HCT116 (cell line): ENCODE measurements at regions of chr1 and their contacts with region 1.

Region 1: DNA sequence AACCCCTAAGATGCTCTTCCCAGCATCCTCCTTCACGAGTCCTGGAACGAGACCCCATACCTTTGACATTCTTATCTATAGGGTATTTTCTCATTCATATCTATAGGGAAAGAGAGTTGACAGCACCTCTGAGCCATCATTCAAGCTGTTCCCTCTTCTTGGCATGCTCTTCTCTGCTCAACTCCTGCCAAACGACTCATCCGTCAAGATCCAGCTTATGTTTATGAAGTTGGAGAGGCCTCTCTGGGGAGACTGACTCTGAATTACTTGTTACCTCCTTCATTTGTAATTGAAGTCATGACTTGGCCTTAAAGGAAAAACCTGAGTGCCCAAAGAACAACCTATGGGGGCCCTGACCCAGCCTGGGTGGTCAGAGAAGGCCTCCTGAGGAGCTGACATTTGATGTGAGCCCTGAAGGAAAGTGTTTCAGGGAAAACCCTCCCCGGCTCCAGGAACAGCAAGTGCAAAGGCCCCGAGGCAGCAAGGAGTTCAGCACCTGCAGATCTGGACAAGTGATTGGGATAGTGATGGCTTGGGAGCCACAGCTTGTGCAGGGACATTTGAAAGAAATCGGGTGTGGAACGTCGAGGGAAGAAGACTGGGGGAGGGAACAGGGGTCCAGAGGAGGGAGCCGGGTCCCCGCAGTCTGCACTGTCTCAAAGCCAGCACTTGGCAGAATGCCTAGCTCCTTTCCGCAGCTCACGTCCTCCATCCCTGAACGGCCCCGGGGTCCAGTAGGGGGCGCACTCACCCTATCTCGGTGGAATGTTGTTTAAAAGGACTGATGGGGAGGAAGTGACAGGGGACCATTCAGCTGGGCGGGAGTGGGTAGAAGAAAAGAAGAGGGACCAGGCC is 14.0 kb upstream of the CDA start:
- DNase-seq: peak; percentile 85
- ATAC-seq: peak; percentile 86
- H3K4me3 ChIP-seq: no peak overlapping the region
- H3K27ac ChIP-seq: peak overlapping the region; percentile 61
- H3K4me1 ChIP-seq: peaks cover 17 to 44% of the 10 kb centered on the region in 2 experiments
- H3K27me3 ChIP-seq: 0 out of 2 replicates have a peak, but pooled peaks cover 2% of the 10 kb centered on the region
- CTCF ChIP-seq: peak; percentile 93 to 96 (median 95); a peak in 5 of 6 replicates
- POLR2A ChIP-seq: no peak
- RAD21 ChIP-seq: peak; percentile 97

Region 2: GRCh38 chr1:20472860-20473711 is 101.8 kb before region 1 on chr1:
- CTCF ChIA-PET with region 1: no interaction called
- POLR2A ChIA-PET with region 1: no interaction called
- RAD21 ChIA-PET with region 1: no interaction called
- intact Hi-C with region 1: no loop called
- DNase-seq: no peak
- ATAC-seq: no peak
- H3K4me3 ChIP-seq: no peak overlapping the region
- H3K27ac ChIP-seq: no peak overlapping the region
- H3K4me1 ChIP-seq: peaks cover 36 to 38% of the 10 kb centered on the region in 2 experiments
- H3K27me3 ChIP-seq: 0 out of 2 replicates have a peak, but pooled peaks cover under 1% of the 10 kb centered on the region
- CTCF ChIP-seq: no peak
- POLR2A ChIP-seq: no peak
- RAD21 ChIP-seq: no peak

Region 3: GRCh38 chr1:20521960-20522861 is 52.7 kb before region 1 on chr1:
- CTCF ChIA-PET with region 1: interaction called, 3 read pairs
- POLR2A ChIA-PET with region 1: no interaction called
- RAD21 ChIA-PET with region 1: interaction called in 1 of 2 experiments, 3 read pairs
- intact Hi-C with region 1: loop called (anchors 2 kb)
- DNase-seq: peak; percentile 81
- ATAC-seq: peak; percentile 94
- H3K4me3 ChIP-seq: peak overlapping the region in 1 of 2 experiments; percentile 18; a peak in 2 of 4 replicates
- H3K27ac ChIP-seq: no peak overlapping the region
- H3K4me1 ChIP-seq: peaks cover 0 to 8% of the 10 kb centered on the region in 2 experiments; a peak in 2 of 4 replicates
- H3K27me3 ChIP-seq: no peaks in the 10 kb centered on the region
- CTCF ChIP-seq: peak; percentile 83 to 96 (median 91)
- POLR2A ChIP-seq: no peak
- RAD21 ChIP-seq: peak; percentile 99

Region 4: DNA sequence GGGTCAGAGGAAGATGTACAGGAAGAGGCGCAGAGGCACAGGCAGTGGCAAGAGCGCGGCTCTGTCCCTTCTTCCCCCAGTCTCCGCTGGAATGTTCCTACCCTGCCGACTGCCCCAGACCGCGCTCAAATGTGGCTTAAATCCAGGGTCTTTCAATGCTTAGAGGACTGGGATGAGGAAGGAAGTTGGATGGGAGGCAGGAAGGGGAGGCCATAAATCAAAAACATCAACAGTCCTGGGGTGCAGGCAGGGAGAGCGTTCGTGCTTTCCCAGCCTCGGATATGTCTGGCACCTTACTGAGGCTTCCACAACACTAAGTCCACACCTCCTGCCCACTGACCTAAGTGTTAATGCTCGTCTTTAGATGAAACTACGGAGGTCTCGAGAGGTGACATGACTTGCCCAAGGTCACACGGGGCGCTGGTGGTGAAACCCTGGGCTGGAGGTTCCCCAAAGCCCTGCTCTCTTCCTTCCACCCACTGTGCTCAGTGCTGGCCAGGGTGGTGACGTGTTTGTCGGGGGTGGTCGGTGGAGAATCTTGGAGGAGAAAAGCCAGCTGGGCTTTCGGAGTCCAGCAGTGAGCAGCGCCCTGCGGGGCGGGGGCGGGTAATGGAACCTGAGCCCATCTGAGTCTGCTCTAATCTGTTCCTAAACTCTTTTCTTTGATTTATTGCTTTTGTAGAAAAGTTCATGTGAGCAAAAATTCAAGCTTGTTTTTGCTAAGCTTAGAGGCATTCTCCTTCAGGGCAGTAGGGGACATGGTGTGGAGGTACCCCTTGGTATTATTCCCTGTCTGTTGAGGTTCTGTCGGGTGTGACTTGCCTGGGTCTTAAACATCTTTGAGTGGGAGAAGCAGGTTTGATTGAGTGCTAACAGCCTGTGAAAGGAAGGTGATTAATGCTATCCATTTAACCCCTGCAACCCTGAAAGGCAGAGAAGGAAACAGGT is 14.7 kb after region 1 on chr1:
- CTCF ChIA-PET with region 1: interaction called, 17 read pairs
- POLR2A ChIA-PET with region 1: interaction called, 5 read pairs
- RAD21 ChIA-PET with region 1: interaction called, 3 to 5 read pairs
- intact Hi-C with region 1: no loop called
- DNase-seq: no peak
- ATAC-seq: peak; percentile 23
- H3K4me3 ChIP-seq: peak overlapping the region; percentile 68 to 71
- H3K27ac ChIP-seq: peak overlapping the region; percentile 38; the same call in 1 of the 2 replicates
- H3K4me1 ChIP-seq: peaks cover 23 to 45% of the 10 kb centered on the region in 2 experiments
- H3K27me3 ChIP-seq: no peaks in the 10 kb centered on the region
- CTCF ChIP-seq: no peak
- POLR2A ChIP-seq: no peak
- RAD21 ChIP-seq: no peak

Region 5: GRCh38 chr1:20614130-20614580 is 39.2 kb after region 1 on chr1:
- CTCF ChIA-PET with region 1: interaction called, 6 read pairs
- POLR2A ChIA-PET with region 1: interaction called, 5 read pairs
- RAD21 ChIA-PET with region 1: interaction called in 1 of 2 experiments, 6 read pairs
- intact Hi-C with region 1: loop called (anchors 5 kb)
- DNase-seq: no peak
- ATAC-seq: peak; percentile 6; the same call in 1 of the 2 replicates
- H3K4me3 ChIP-seq: no peak overlapping the region
- H3K27ac ChIP-seq: peak overlapping the region; percentile 94
- H3K4me1 ChIP-seq: peaks cover 34 to 45% of the 10 kb centered on the region in 2 experiments
- H3K27me3 ChIP-seq: no peaks in the 10 kb centered on the region
- CTCF ChIP-seq: no peak
- POLR2A ChIP-seq: no peak
- RAD21 ChIP-seq: no peak

Region 6: GRCh38 chr1:20640183-20640597 is 65.3 kb after region 1 on chr1:
- CTCF ChIA-PET with region 1: interaction called, 74 read pairs
- POLR2A ChIA-PET with region 1: interaction called, 10 read pairs
- RAD21 ChIA-PET with region 1: no interaction called
- intact Hi-C with region 1: loop called (anchors 2 kb)
- DNase-seq: peak; percentile 37
- ATAC-seq: peak; percentile 81
- H3K4me3 ChIP-seq: no peak overlapping the region
- H3K27ac ChIP-seq: no peak overlapping the region
- H3K4me1 ChIP-seq: 0 out of 4 replicates have a peak, but pooled peaks cover under 1 to 2% of the 10 kb centered on the region in 2 experiments
- H3K27me3 ChIP-seq: no peaks in the 10 kb centered on the region
- CTCF ChIP-seq: peak; percentile 78 to 91 (median 88)
- POLR2A ChIP-seq: no peak
- RAD21 ChIP-seq: peak; percentile 94

Region 7: DNA sequence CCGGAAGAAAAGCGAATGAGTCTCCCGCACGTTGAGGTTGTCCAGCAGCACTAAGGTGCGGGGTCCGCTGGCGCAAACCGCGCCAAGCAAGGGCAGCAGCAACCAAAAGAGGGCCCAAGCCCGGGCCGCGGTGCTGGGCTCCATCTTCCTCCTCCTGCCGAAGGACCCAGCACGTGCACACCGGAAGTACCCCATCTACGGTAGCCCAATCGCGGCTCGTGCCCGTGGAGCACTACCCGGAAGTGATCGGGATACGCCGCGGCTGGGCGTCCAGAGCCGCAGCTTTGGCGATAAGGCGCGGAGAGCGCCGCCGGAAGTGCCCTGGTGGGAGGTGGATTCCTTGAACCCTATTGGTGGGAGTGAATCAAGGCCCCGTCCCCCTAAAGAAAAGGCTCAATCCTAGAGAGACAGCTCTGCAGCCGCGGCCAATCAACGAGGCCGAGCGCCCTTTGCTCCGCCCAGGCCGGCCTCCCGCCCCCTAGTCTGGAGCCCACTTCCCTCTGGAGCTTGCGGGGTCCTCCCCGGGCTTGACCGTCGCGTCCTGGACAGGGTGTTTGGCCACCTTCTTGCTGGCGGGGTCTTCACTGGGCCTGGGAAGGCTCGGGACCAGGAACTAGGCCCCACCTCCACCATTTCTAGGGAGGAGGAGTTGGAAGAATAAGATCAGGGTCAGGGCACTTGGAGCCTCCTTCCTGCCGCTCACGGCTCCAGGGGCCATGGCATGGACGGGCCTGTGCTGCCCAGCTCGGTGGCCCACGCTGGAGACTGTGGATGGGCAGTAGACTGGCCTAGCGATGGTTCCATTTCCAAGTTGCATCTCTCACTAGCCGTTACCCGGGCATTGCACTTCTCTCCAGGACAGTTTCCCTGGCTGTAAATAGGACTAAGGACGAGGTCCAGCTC is 86.5 kb after region 1 on chr1 and contains the start of gene DDOST:
- CTCF ChIA-PET with region 1: interaction called, 16 read pairs
- POLR2A ChIA-PET with region 1: no interaction called
- RAD21 ChIA-PET with region 1: interaction called in 1 of 2 experiments, 5 read pairs
- intact Hi-C with region 1: no loop called
- DNase-seq: peak; percentile 97
- ATAC-seq: peak; percentile 96
- H3K4me3 ChIP-seq: peak within 1 kb of the TSS; percentile 90 to 100
- H3K27ac ChIP-seq: peak within 1 kb of the TSS; percentile 68
- H3K4me1 ChIP-seq: peaks cover 12 to 21% of the 10 kb centered on the region in 2 experiments
- H3K27me3 ChIP-seq: no peaks in the 10 kb centered on the region
- CTCF ChIP-seq: peak in 2 of 3 experiments; percentile 36 to 53; a peak in 4 of 6 replicates
- POLR2A ChIP-seq: peak; percentile 45
- RAD21 ChIP-seq: no peak
- total RNA-seq, gene DDOST: 387 TPM